Stomach (tissue), 19 donors: ENCODE measurements at regions of chr1 and their contacts with region 1.

Region 1: DNA sequence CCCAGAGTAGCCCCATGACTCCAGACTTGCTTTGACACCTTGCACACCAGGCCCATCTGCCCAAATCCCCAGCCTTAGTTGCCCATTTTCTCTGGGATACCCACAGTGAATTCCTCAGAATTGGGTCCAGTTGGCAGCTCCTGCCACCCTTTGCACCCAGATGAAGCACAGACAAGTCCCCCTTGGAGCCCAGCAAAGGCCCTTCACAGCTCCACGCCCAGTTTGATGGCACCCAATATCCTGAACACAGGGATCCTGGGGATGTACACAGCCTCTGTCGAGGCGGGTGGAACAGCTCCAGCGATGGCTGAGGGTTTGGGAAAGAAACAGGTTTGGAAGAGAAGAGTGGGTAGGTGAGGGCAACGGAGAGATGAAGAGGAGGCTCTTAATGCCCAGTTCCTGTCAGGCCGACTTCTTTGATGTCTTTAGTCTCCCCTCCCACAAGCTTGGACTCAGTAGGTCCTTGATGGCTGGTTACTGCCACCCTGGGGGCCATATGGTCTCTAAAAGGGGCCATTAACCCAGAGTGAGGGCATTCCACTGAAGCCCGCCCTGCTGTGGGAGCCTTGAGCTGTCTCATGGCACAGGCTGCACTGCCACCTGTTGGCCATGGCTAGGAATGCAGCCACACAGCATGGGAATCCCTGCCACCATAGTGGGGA is 21.7 kb downstream of the TMEM53 start:
- DNase-seq: peak; percentile 83 to 91
- H3K4me3 ChIP-seq: no peak overlapping the region
- H3K27ac ChIP-seq: peak overlapping the region in 1 of 5 donors; percentile 5
- H3K4me1 ChIP-seq: peaks cover 0 to 10% (median 5%) of the 10 kb centered on the region in 4 donors
- H3K27me3 ChIP-seq: no peaks in the 10 kb centered on the region
- CTCF ChIP-seq: peak in 5 of 7 experiments; percentile 86 to 96 (median 92)
- EP300 ChIP-seq: no peak
- POLR2A ChIP-seq: no peak

Region 2: DNA sequence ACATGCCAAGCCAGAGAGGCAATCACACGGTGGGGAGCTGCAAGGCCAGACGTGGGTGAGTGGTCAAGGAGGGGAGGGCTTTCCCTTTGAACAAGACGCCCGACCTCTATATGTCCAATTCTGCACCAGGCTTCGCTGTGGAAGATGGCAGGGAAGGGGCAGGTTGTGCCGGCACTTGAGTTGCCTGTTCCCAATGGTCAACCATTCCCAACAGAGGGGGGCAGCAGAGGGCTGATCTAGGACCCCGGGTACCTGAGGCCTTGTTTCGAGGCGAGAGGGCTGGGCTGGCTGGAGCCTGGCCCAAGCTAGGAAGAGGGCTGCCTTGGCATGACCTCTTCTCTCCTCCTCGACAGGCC is 43.2 kb before region 1 on chr1:
- intact Hi-C with region 1: loop called (anchors 5 kb)
- DNase-seq: peak; percentile 69 to 73
- H3K4me3 ChIP-seq: no peak overlapping the region
- H3K27ac ChIP-seq: no peak overlapping the region
- H3K4me1 ChIP-seq: no peaks in the 10 kb centered on the region
- H3K27me3 ChIP-seq: peaks cover 0 to 22% (median 0%) of the 10 kb centered on the region in 3 donors
- CTCF ChIP-seq: peak in 5 of 7 experiments; percentile 24 to 46 (median 35)
- EP300 ChIP-seq: no peak
- POLR2A ChIP-seq: no peak

Region 3: DNA sequence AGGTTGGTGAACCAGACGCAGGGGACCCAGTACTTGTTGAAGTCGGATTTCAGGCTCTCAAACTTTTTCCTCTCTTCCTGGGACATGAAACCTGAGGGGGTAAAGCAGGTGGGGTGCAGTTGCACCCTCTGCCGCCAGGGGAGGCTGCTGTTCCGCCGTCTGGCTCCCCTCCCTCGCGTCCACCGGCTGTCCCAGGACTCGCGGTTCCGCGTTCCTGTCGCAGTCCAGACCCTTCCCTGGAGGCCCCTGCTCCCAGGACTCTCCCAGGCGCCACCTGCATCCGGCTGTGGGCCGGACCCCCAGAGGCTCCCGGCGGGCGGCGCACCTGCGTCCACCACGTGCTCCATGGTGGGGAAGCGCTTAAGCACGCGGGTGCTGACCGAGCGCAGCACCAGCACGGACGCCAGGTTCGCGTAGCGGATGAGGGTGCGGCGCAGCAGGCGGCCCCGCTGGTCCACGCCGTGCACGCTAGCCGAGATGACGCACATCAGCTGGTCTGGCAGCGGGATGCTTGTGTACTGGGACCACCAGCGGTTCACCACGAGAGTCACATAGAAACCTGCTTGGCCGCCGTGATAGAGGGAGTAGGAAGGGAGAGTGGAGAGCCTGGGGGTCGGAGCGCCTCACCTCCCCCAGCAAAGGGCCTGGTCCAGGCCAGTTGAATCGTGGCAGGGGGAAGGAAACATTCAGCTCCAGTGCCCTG is 133.7 kb after region 1 on chr1:
- intact Hi-C with region 1: no loop called
- DNase-seq: peak; percentile 77 to 93
- H3K4me3 ChIP-seq: peak overlapping the region; percentile 47 to 51 (median 50)
- H3K27ac ChIP-seq: peak overlapping the region; percentile 27 to 78 (median 52)
- H3K4me1 ChIP-seq: peaks cover 32 to 36% (median 34%) of the 10 kb centered on the region in 4 donors
- H3K27me3 ChIP-seq: no peaks in the 10 kb centered on the region
- CTCF ChIP-seq: peak in 6 of 7 experiments; percentile 72 to 100 (median 99)
- EP300 ChIP-seq: no peak
- POLR2A ChIP-seq: no peak

Region 4: DNA sequence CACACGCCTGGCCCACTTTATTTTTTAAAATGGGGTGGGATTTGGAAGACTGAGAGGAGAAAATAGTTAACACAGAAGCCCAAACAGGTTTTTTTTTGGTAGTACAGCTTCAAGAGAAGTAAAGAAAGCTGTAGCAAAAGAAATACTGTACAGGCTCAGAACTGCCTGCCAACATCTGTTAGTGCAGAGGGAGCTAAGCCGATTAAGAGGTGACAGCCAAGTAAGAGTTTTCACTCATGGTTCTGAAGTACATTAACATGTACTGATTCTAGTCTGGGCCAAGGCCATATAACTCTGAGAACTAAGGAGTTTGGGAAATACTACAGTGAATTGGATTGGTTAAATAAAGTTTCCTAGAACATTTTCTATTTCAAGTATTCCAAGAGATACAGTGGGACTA is 282.2 kb after region 1 on chr1:
- intact Hi-C with region 1: no loop called
- DNase-seq: peak in 1 of 2 donors; percentile 52
- H3K4me3 ChIP-seq: no peak overlapping the region
- H3K27ac ChIP-seq: no peak overlapping the region
- H3K4me1 ChIP-seq: no peaks in the 10 kb centered on the region
- H3K27me3 ChIP-seq: no peaks in the 10 kb centered on the region
- CTCF ChIP-seq: no peak
- EP300 ChIP-seq: no peak
- POLR2A ChIP-seq: no peak